Activated naive CD4-positive, alpha-beta T cell treated with anti-CD3 and anti-CD28 coated beads for 36 hours (primary cell): ENCODE measurements at regions of chr5 and their contacts with region 1.

Region 1: GRCh38 chr5:36870399-36871040 is 6.0 kb upstream of the NIPBL start:
- DNase-seq: no peak
- H3K4me3 Mint-ChIP-seq: no peak overlapping the region
- H3K27ac Mint-ChIP-seq: no peak overlapping the region
- H3K4me1 Mint-ChIP-seq: peaks cover 23% of the 10 kb centered on the region
- H3K27me3 Mint-ChIP-seq: no peaks in the 10 kb centered on the region

Region 2: GRCh38 chr5:37005946-37006540 is 135.5 kb after region 1 on chr5:
- CTCF ChIA-PET with region 1: interaction called, 6 read pairs
- intact Hi-C with region 1: loop called (anchors 2 kb)
- DNase-seq: no peak
- H3K4me3 Mint-ChIP-seq: no peak overlapping the region
- H3K27ac Mint-ChIP-seq: no peak overlapping the region
- H3K4me1 Mint-ChIP-seq: no peaks in the 10 kb centered on the region
- H3K27me3 Mint-ChIP-seq: no peaks in the 10 kb centered on the region